CD8-positive, alpha-beta T cell (primary cell): ENCODE measurements at regions of chr11 and their contacts with region 1.

Region 1: DNA sequence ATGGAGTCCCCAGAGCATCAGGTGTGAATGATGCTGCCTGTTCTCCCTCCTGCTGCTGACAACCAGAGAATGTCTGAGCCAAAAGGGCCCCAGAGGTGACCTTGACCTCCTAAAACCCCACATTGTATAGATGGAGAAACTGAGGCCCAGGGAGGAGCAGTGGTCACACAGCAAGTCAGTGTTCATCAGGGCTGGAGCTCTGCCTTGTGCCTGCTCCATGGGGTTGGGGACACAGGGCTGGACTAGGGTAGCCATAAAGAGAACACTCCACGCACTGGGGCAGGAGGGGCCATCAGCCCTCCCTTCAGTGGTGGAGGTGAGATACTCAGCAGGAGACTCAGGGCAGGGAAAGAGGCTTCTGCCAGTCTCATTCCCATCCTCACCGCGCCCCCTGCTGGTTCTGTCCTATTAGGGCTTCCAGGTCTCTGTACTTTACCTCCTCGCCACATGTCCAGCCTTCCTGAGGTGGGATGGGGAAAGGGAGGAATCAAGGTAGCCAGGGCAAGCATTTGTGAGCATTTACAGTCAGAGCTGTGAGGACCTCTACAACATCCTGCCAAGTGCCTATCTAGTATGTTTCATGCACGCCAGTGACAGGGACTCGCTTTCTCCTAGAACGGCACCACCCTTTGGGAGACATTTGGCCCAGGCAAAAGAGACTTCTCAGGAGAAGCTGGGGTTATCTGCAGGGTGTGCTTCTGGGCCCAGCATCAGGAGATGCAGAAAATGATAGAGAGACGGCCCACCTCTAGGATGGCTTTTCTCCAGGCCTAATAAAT is 43.2 kb downstream of the NEU3 start:
- DNase-seq: peak; percentile 29 to 72 (median 53)
- ATAC-seq: peak; percentile 56
- H3K4me3 ChIP-seq: no peak overlapping the region
- H3K4me3 Mint-ChIP-seq: no peak overlapping the region
- H3K27ac ChIP-seq: no peak overlapping the region
- H3K27ac Mint-ChIP-seq: no peak overlapping the region
- H3K4me1 ChIP-seq: no peaks in the 10 kb centered on the region
- H3K4me1 Mint-ChIP-seq: no peaks in the 10 kb centered on the region
- H3K27me3 ChIP-seq: no peaks in the 10 kb centered on the region
- H3K27me3 Mint-ChIP-seq: no peaks in the 10 kb centered on the region
- CTCF ChIP-seq: peak; percentile 52

Region 2: DNA sequence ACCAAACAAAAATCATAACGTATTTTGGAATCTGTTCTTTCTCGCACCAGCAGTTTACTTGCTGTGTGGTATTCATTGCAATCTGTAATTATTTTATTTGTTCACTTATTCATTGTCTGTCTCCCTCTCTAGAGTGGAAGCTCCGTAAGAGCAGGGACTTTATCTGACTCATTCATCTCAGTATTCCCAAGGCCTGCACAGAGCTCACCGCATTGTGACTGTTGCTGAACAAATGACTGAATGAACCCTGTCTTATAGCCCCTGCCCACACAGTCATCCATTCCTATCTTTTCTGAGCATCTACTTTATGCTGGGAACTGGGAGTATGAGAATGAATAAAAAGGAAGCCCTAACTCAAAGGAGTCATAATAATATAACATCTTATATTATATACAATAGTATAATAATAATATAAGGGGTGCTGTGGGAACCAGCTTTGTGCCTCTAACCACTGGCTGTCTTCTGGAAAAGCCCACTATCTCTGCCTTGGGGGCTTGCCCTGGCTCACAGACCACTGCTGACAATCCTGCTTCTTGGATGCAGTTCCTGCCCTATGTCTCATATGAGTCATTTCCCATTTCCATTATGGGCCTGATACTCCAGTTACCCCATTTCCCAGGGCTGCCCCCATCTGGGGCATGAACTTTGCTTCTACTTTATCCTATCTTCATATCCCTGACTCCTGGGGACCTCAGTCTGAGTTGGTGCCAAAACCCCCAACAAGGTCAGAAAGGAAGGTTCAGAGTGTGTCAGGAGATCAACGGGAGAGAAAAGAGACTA is 94.1 kb before region 1 on chr11:
- CTCF ChIA-PET with region 1: interaction called, 11 read pairs
- POLR2A ChIA-PET with region 1: no interaction called
- intact Hi-C with region 1: no loop called
- DNase-seq: no peak
- ATAC-seq: no peak
- H3K4me3 ChIP-seq: no peak overlapping the region
- H3K4me3 Mint-ChIP-seq: no peak overlapping the region
- H3K27ac ChIP-seq: no peak overlapping the region
- H3K27ac Mint-ChIP-seq: no peak overlapping the region
- H3K4me1 ChIP-seq: no peaks in the 10 kb centered on the region
- H3K4me1 Mint-ChIP-seq: peaks cover 10% of the 10 kb centered on the region
- H3K27me3 ChIP-seq: no peaks in the 10 kb centered on the region
- H3K27me3 Mint-ChIP-seq: no peaks in the 10 kb centered on the region
- CTCF ChIP-seq: no peak

Region 3: DNA sequence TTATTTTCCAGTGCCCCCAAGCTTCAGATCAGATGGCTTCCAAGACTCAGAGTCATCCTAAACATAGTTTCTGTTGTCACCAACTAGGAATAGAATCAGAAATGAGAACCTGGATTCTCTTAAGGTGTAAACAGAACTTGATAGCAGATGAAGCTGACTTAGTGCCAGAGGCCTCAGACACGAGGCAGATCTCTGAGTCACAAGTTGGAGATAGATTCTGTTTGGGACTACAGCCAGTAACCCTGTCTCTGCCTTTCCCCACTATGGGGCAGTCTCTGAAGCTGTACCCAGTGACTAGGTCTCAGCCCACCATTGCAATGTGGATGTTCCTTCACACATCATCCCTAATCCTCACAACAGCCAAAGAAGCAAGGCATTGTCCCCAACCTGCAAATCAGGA is 17.8 kb before region 1 on chr11:
- CTCF ChIA-PET with region 1: interaction called, 10 read pairs
- POLR2A ChIA-PET with region 1: no interaction called
- intact Hi-C with region 1: no loop called
- DNase-seq: no peak
- ATAC-seq: no peak
- H3K4me3 ChIP-seq: no peak overlapping the region
- H3K4me3 Mint-ChIP-seq: no peak overlapping the region
- H3K27ac ChIP-seq: no peak overlapping the region
- H3K27ac Mint-ChIP-seq: no peak overlapping the region
- H3K4me1 ChIP-seq: no peaks in the 10 kb centered on the region
- H3K4me1 Mint-ChIP-seq: no peaks in the 10 kb centered on the region
- H3K27me3 ChIP-seq: no peaks in the 10 kb centered on the region
- H3K27me3 Mint-ChIP-seq: no peaks in the 10 kb centered on the region
- CTCF ChIP-seq: no peak